ENCODE measurements at regions of chr17 and their contacts with region 1.

Region 1: GRCh38 chr17:81512560-81513371 is at the start of gene ACTG1:
- DNase-seq: peak; percentile 90 to 93 (median 91)
- H3K4me3 ChIP-seq: peak within 1 kb of the TSS; percentile 95 to 97
- H3K4me3 Mint-ChIP-seq: peak within 1 kb of the TSS; percentile 92 to 100 (median 98)
- H3K27ac ChIP-seq: peak within 1 kb of the TSS; percentile 78
- H3K27ac Mint-ChIP-seq: peak within 1 kb of the TSS; percentile 94 to 98 (median 95)
- H3K4me1 ChIP-seq: peaks cover 42% of the 10 kb centered on the region
- H3K4me1 Mint-ChIP-seq: peaks cover 20 to 68% (median 43%) of the 10 kb centered on the region in 4 donors
- H3K27me3 ChIP-seq: no peaks in the 10 kb centered on the region
- H3K27me3 Mint-ChIP-seq: no peaks in the 10 kb centered on the region
- total RNA-seq, gene ACTG1: 1,031 to 1,038 TPM

Region 2: DNA sequence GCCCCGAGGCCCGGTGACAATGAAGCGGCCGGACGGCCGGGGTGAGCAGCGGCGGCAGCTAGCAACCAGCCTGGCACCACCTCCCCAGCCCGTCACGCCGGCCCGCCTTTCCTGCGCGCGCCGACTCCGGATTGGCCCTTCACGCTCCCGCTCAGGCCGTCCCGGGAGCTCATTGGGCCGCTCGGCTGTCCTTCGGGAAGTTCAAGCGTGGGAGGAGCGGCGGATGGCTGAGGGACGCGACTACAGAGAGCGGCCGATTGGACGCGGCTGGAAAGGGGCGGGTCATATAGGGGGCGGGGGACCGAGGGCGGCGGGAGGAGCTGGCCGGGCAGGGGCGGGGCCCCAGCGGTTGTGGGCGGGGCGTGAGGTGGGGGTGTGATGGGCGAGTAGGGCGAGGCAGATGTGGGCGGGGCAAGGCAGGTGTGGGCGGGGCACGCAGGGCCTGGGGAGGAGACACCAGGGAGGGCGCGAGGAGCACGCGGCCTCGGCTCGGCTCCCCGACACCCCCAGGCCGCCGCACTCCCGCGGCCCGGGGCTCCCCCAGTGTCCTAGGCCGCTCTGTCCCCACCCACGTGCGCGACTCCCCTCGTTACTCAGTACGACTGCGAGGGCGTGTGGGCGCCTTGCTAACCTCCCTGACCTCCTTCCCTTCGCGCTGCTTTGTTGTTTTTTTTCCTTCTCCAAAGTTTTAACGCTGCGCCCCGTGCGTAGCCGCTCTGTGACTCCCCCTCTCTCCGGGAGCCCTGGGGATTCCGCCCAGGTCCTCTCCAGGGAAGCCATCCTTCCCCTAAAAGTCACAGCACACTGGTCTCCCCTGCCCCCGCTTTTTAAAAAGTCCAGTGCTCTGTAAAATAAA is 289.6 kb before region 1 on chr17 and contains the start of gene CEP131:
- CTCF ChIA-PET with region 1: no interaction called
- POLR2A ChIA-PET with region 1: interaction called, 10 read pairs
- intact Hi-C with region 1: no loop called
- DNase-seq: peak; percentile 98 to 99 (median 98)
- H3K4me3 ChIP-seq: peak within 1 kb of the TSS in 1 of 2 donors; percentile 50
- H3K4me3 Mint-ChIP-seq: peak within 1 kb of the TSS; percentile 73 to 85 (median 79)
- H3K27ac ChIP-seq: peak within 1 kb of the TSS; percentile 54
- H3K27ac Mint-ChIP-seq: peak within 1 kb of the TSS in 5 of 7 donors; percentile 22 to 81 (median 75)
- H3K4me1 ChIP-seq: peaks cover 18% of the 10 kb centered on the region
- H3K4me1 Mint-ChIP-seq: peaks cover 0 to 22% (median 17%) of the 10 kb centered on the region in 4 donors
- H3K27me3 ChIP-seq: no peaks in the 10 kb centered on the region
- H3K27me3 Mint-ChIP-seq: no peaks in the 10 kb centered on the region
- total RNA-seq, gene CEP131: 9.6 to 10.5 TPM

Region 3: DNA sequence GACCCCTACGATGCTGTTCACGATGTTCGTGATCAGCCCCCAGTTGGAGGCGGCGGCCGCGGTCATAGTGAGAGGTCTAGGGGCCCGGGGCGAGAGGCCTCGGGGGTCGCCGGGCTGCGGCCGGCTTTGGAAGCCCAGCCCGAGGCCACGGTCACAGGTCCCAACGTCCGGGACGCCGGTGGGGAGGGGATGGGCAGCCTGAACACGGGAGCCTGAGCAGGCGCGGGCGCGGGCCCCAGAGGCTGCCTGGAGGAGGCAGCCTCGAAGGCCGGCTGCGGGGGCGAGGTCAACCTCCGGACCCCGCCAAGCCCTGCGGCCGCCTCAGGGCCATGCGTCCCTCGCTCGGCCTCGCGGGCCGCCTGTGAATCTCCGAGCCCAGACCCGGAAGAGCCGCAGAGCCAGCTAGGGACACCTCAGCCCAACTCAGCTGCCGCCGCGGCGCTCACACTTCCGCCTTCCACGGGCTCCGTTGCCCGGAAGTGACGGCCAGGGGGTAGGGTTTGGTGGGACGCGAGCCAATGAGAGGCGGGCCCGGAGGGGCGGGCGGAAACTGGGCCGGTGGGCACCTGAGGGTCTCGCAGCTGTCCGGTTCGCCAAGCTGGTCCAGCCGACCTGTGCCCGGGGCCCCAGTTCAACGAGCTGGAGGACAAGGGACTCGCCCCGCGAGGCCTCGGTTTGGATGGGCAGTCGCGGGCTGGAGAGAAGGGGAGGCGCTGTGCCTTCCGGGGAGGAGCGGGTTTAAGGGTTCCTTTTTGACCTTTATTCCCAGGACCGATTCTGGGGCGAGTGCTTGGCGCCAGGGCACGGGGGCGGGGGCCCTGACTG is 217.7 kb before region 1 on chr17 and contains the start of gene SLC38A10:
- CTCF ChIA-PET with region 1: no interaction called
- POLR2A ChIA-PET with region 1: interaction called, 19 read pairs
- intact Hi-C with region 1: no loop called
- DNase-seq: peak; percentile 87 to 93 (median 89)
- H3K4me3 ChIP-seq: peak within 1 kb of the TSS; percentile 68 to 75
- H3K4me3 Mint-ChIP-seq: peak within 1 kb of the TSS; percentile 93 to 98 (median 96)
- H3K27ac ChIP-seq: peak within 1 kb of the TSS; percentile 97
- H3K27ac Mint-ChIP-seq: peak within 1 kb of the TSS; percentile 96 to 99 (median 98)
- H3K4me1 ChIP-seq: peaks cover 45% of the 10 kb centered on the region
- H3K4me1 Mint-ChIP-seq: peaks cover 17 to 56% (median 39%) of the 10 kb centered on the region in 4 donors
- H3K27me3 ChIP-seq: no peaks in the 10 kb centered on the region
- H3K27me3 Mint-ChIP-seq: no peaks in the 10 kb centered on the region
- total RNA-seq, gene SLC38A10: 112 to 113 TPM

Region 4: GRCh38 chr17:81484195-81484979 is 28.4 kb before region 1 on chr17:
- CTCF ChIA-PET with region 1: interaction called, 15 read pairs
- POLR2A ChIA-PET with region 1: interaction called, 29 read pairs
- intact Hi-C with region 1: loop called (anchors 2 kb)
- DNase-seq: peak; percentile 76 to 90 (median 85)
- H3K4me3 ChIP-seq: peak overlapping the region in 1 of 2 donors; percentile 48
- H3K4me3 Mint-ChIP-seq: peak overlapping the region in 1 of 8 donors; percentile 45
- H3K27ac ChIP-seq: no peak overlapping the region
- H3K27ac Mint-ChIP-seq: no peak overlapping the region
- H3K4me1 ChIP-seq: peaks cover 30% of the 10 kb centered on the region
- H3K4me1 Mint-ChIP-seq: peaks cover 2 to 24% (median 7%) of the 10 kb centered on the region in 4 donors
- H3K27me3 ChIP-seq: peaks cover 22% of the 10 kb centered on the region
- H3K27me3 Mint-ChIP-seq: peaks cover 11 to 20% of the 10 kb centered on the region in 2 donors

Region 5: GRCh38 chr17:81683584-81684237 is 170.9 kb after region 1 on chr17 and contains the starts of genes ARL16 and HGS:
- CTCF ChIA-PET with region 1: no interaction called
- POLR2A ChIA-PET with region 1: interaction called, 7 read pairs
- intact Hi-C with region 1: loop called (anchors 5 kb)
- DNase-seq: peak; percentile 97 to 98 (median 98)
- H3K4me3 ChIP-seq: peak within 1 kb of the TSS; percentile 80 to 93
- H3K4me3 Mint-ChIP-seq: peak within 1 kb of the TSS; percentile 94 to 99 (median 97)
- H3K27ac ChIP-seq: peak within 1 kb of the TSS; percentile 83
- H3K27ac Mint-ChIP-seq: peak within 1 kb of the TSS; percentile 84 to 99 (median 96)
- H3K4me1 ChIP-seq: peaks cover 31% of the 10 kb centered on the region
- H3K4me1 Mint-ChIP-seq: peaks cover 20 to 54% (median 27%) of the 10 kb centered on the region in 4 donors
- H3K27me3 ChIP-seq: no peaks in the 10 kb centered on the region
- H3K27me3 Mint-ChIP-seq: no peaks in the 10 kb centered on the region
- total RNA-seq, gene ARL16: 25.9 to 27.7 TPM
- total RNA-seq, gene HGS: 182 to 206 TPM

Measured in CD4-positive, alpha-beta memory T cell (primary cell).